ENCODE measurements at regions of chr4 and their contacts with region 1.

Region 1: GRCh38 chr4:83034630-83035494 is at the start of gene COPS4:
- DNase-seq: peak; percentile 98
- ATAC-seq: peak; percentile 97
- H3K4me3 ChIP-seq: peak within 1 kb of the TSS; percentile 98
- H3K27ac ChIP-seq: peak within 1 kb of the TSS; percentile 82
- H3K4me1 ChIP-seq: peaks cover 19% of the 10 kb centered on the region
- H3K27me3 ChIP-seq: no peaks in the 10 kb centered on the region
- CTCF ChIP-seq: no peak
- total RNA-seq, gene COPS4: 49.5 and 58.3 TPM in 2 replicates

Region 2: GRCh38 chr4:82373816-82374625 is 660.8 kb before region 1 on chr4 and contains the start of gene HNRNPD:
- CTCF ChIA-PET with region 1: no interaction called
- POLR2A ChIA-PET with region 1: no interaction called
- intact Hi-C with region 1: loop called (anchors 10 kb)
- DNase-seq: peak; percentile 96
- ATAC-seq: peak; percentile 89
- H3K4me3 ChIP-seq: peak within 1 kb of the TSS; percentile 97
- H3K27ac ChIP-seq: peak within 1 kb of the TSS; percentile 87
- H3K4me1 ChIP-seq: peaks cover 19% of the 10 kb centered on the region
- H3K27me3 ChIP-seq: no peaks in the 10 kb centered on the region
- CTCF ChIP-seq: no peak
- total RNA-seq, gene HNRNPD: 86.4 and 136 TPM in 2 replicates

Region 3: GRCh38 chr4:82909326-82909725 is 125.5 kb before region 1 on chr4:
- CTCF ChIA-PET with region 1: no interaction called
- POLR2A ChIA-PET with region 1: interaction called, 19 read pairs
- intact Hi-C with region 1: no loop called
- DNase-seq: no peak
- ATAC-seq: peak; percentile 76
- H3K4me3 ChIP-seq: no peak overlapping the region
- H3K27ac ChIP-seq: no peak overlapping the region
- H3K4me1 ChIP-seq: peaks cover 11% of the 10 kb centered on the region
- H3K27me3 ChIP-seq: no peaks in the 10 kb centered on the region
- CTCF ChIP-seq: no peak

Region 4: DNA sequence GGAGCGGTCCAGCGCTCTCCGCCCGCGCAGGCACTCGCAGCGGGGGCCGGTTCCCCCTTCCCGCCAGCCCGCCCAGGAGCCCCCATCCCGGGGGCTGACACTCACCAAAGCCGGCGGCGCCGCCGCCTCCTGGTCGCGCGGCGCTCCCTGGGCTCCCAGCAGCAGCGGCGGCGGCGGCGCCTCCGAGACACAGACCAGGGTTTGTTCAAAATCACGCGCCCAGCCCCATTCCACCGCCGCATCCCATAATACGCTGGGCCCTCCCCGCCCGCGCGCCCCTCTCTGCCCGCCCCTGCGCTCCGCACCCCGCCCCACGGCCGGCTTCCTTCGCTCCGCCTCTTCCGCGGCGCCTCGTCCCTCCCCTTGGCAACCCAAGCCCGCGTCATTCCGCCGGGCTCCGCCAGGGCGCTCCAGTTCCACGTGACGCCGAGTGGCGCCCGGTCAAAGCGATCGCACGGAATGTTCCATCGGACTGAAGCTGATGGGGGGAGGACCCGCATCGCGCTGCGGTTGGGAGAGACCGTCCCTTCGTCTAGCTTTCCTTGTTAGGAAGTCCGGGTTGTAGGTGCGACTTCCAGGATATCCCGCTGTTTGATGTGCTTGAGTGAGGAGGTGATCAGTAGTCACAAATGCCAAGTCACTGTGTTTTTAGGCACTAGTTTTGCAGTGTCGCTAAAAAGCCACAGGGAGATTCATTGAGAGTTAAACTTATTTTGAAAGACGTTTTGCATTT is 22.0 kb before region 1 on chr4:
- CTCF ChIA-PET with region 1: interaction called, 3 read pairs
- POLR2A ChIA-PET with region 1: interaction called, 15 read pairs
- intact Hi-C with region 1: loop called (anchors 1 kb)
- DNase-seq: peak; percentile 97
- ATAC-seq: peak; percentile 76
- H3K4me3 ChIP-seq: peak overlapping the region; percentile 99
- H3K27ac ChIP-seq: peak overlapping the region; percentile 66
- H3K4me1 ChIP-seq: peaks cover 19% of the 10 kb centered on the region
- H3K27me3 ChIP-seq: no peaks in the 10 kb centered on the region
- CTCF ChIP-seq: 0 out of 2 replicates have a peak, but pooled peaks have one; percentile 16

Region 5: GRCh38 chr4:83217721-83218522 is 183.1 kb after region 1 on chr4:
- CTCF ChIA-PET with region 1: no interaction called
- POLR2A ChIA-PET with region 1: interaction called, 17 read pairs
- intact Hi-C with region 1: no loop called
- DNase-seq: no peak
- ATAC-seq: no peak
- H3K4me3 ChIP-seq: no peak overlapping the region
- H3K27ac ChIP-seq: no peak overlapping the region
- H3K4me1 ChIP-seq: no peaks in the 10 kb centered on the region
- H3K27me3 ChIP-seq: no peaks in the 10 kb centered on the region
- CTCF ChIP-seq: no peak

Measured in PC-3 (cell line).